AG04450 (cell line): ENCODE measurements at regions of chr6 and their contacts with region 1.

Region 1: GRCh38 chr6:11064836-11065235 is 20.7 kb upstream of the ELOVL2 start:
- DNase-seq: no peak
- H3K4me3 ChIP-seq: no peak overlapping the region
- H3K27ac ChIP-seq: no peak overlapping the region
- H3K27me3 ChIP-seq: peaks cover 9% of the 10 kb centered on the region
- CTCF ChIP-seq: no peak

Region 2: GRCh38 chr6:11083491-11083890 is 18.7 kb after region 1 on chr6:
- CTCF ChIA-PET with region 1: interaction called, 17 read pairs
- POLR2A ChIA-PET with region 1: no interaction called
- DNase-seq: no peak
- H3K4me3 ChIP-seq: no peak overlapping the region
- H3K27ac ChIP-seq: no peak overlapping the region
- H3K27me3 ChIP-seq: no peaks in the 10 kb centered on the region
- CTCF ChIP-seq: no peak

Region 3: DNA sequence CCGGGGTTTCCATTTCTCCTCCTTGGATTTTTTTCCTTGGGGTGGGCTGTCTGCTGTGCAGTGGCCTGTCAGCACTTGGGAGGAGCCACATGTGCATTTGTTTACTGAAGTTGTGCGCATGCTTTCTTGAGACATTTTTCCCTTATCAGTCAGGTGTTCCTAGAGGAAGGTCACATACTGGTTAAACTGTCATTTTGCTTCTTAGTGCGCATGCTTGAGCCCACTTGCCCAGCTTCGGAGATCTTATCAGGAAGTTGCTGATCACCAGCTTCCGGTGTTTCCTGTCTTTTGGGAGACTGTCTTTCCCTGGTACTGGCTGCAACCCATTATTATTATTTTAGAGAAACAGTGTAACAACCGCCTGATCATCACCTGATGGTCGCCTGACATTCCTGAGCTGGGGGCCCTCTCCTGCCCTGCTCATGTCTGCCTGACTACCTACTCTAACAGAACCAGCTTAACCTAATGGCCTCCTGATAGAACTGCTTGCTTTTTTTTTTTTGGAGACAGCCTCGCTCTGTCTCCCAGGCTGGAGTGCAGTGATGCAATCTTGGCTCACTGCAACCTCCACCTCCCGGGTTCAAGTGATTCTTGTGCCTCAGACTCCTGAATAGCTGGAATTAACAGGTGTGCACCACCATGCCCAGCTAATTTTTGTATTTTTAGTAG is 47.1 kb after region 1 on chr6:
- CTCF ChIA-PET with region 1: interaction called, 14 read pairs
- POLR2A ChIA-PET with region 1: no interaction called
- DNase-seq: no peak
- H3K4me3 ChIP-seq: no peak overlapping the region
- H3K27ac ChIP-seq: no peak overlapping the region
- H3K27me3 ChIP-seq: no peaks in the 10 kb centered on the region
- CTCF ChIP-seq: no peak

Region 4: DNA sequence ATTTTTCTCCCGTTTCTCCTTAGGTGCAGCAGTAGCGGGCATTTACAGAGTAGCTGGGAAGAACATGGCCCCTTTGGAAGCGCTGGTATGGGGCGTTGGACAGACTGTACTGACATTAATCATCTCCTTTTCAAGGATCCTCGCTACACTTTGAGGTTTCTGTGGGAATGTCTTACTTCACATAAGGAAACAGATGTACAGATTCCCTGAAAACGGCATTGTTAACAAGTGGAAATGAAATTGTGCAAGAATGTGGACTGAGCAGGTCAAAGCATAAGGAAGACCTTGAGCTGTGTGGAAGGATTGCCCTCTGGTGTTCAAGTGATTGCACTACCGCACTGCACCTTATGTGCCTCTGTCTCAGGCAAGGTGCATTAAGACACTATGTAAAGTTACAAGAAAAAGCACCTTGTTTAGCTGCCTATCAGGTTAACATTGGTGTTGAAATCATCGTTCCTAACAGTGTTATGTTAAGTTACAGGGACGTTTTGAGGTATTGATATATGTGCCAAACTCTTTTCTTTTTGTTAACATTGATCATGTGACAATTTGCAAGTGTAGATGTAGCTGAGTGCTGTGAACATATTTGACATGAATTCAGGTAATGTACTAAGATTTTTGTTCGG is 510.7 kb after region 1 on chr6:
- CTCF ChIA-PET with region 1: interaction called, 10 read pairs
- POLR2A ChIA-PET with region 1: no interaction called
- DNase-seq: peak; percentile 55
- H3K4me3 ChIP-seq: no peak overlapping the region
- H3K27ac ChIP-seq: no peak overlapping the region
- H3K27me3 ChIP-seq: no peaks in the 10 kb centered on the region
- CTCF ChIP-seq: peak; percentile 98